SK-MEL-5 (cell line): ENCODE measurements at regions of chr17 and their contacts with region 1.

Region 1: DNA sequence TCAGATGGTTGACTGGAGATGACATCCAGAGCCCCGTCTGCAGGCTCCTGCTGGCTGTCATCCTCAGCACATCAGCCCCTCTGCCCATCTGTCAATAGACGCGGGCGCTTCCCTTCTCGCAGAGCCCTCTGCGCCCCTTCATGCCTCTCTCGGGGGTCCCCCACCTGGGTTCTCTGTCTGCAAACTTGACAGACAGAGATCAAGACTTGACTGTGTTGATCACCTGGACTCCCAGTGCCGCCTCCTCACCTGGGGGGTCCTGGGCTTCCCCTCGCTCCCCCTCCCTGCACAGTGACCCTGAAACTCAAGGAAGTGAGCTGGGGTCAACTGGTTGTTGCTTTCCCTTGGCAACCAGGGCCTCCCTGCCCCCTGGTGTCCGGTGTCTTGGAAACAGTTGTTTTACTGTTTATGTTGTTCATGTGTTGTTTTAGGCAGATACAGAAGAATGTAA is 31.9 kb downstream of the RNF213 start:
- DNase-seq: peak; percentile 42

Region 2: GRCh38 chr17:80212962-80213642 is 79.4 kb before region 1 on chr17:
- in situ Hi-C with region 1: no loop called
- DNase-seq: no peak

Region 3: GRCh38 chr17:80374732-80375585 is 82.4 kb after region 1 on chr17:
- in situ Hi-C with region 1: loop called (anchors 10 kb)
- DNase-seq: no peak